PC-3 (cell line): ENCODE measurements at regions of chr10 and their contacts with region 1.

Region 1: GRCh38 chr10:53997953-53998352 is 803.1 kb downstream of the PCDH15 start:
- DNase-seq: peak; percentile 60
- ATAC-seq: peak; percentile 93
- H3K4me3 ChIP-seq: no peak overlapping the region
- H3K27ac ChIP-seq: no peak overlapping the region
- H3K4me1 ChIP-seq: no peaks in the 10 kb centered on the region
- H3K27me3 ChIP-seq: no peaks in the 10 kb centered on the region
- CTCF ChIP-seq: peak; percentile 87

Region 2: DNA sequence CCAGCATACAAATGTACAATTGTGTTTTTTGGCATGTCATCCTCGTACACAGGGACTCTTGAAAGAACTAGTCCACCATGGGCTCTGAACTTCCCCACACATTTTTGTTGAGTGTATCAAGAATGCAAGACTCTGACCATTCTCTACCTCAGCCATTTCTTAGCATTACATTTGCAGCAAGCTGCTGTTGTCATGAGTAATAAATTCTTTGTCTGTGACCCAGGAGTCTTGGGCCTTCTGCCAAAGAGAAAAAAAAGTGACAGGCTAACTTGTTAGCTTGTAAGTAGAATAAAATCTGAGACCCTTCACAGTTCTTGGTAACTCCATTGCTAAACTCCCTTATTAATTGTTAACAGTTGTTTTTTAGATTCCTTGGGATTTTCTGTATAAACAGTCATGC is 683.1 kb before region 1 on chr10:
- CTCF ChIA-PET with region 1: interaction called, 6 read pairs
- POLR2A ChIA-PET with region 1: no interaction called
- intact Hi-C with region 1: loop called (anchors 5 kb)
- DNase-seq: peak; percentile 100
- ATAC-seq: peak; percentile 97
- H3K4me3 ChIP-seq: no peak overlapping the region
- H3K27ac ChIP-seq: no peak overlapping the region
- H3K4me1 ChIP-seq: peaks cover 14% of the 10 kb centered on the region
- H3K27me3 ChIP-seq: no peaks in the 10 kb centered on the region
- CTCF ChIP-seq: no peak

Region 3: DNA sequence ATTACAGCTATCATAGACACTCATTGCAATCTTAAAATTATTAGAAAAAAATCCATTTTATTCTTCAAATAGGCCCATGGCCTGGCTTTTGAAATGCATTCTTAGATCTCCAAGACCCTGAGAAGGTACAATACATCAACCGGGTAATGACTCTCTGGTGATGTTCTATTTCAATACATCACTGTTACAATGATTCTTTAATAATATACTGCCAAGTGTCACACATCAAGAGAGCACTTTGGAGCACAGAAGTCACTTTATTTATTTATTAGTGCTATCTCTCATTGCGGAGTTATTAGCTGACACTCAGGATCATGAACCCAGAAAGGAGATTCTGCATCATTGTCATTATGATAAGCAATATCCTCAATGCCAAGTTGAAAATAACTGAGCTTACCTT is 476.9 kb before region 1 on chr10:
- CTCF ChIA-PET with region 1: no interaction called
- POLR2A ChIA-PET with region 1: no interaction called
- intact Hi-C with region 1: no loop called
- DNase-seq: no peak
- ATAC-seq: no peak
- H3K4me3 ChIP-seq: no peak overlapping the region
- H3K27ac ChIP-seq: no peak overlapping the region
- H3K4me1 ChIP-seq: no peaks in the 10 kb centered on the region
- H3K27me3 ChIP-seq: no peaks in the 10 kb centered on the region
- CTCF ChIP-seq: no peak

Region 4: GRCh38 chr10:54063514-54063913 is 65.6 kb after region 1 on chr10:
- CTCF ChIA-PET with region 1: no interaction called
- POLR2A ChIA-PET with region 1: no interaction called
- intact Hi-C with region 1: no loop called
- DNase-seq: no peak
- ATAC-seq: no peak
- H3K4me3 ChIP-seq: no peak overlapping the region
- H3K27ac ChIP-seq: no peak overlapping the region
- H3K4me1 ChIP-seq: no peaks in the 10 kb centered on the region
- H3K27me3 ChIP-seq: no peaks in the 10 kb centered on the region
- CTCF ChIP-seq: no peak

Region 5: GRCh38 chr10:54124209-54124885 is 126.4 kb after region 1 on chr10:
- CTCF ChIA-PET with region 1: interaction called, 3 read pairs
- POLR2A ChIA-PET with region 1: no interaction called
- intact Hi-C with region 1: loop called (anchors 1 kb)
- DNase-seq: peak; percentile 74
- ATAC-seq: peak; percentile 90
- H3K4me3 ChIP-seq: no peak overlapping the region
- H3K27ac ChIP-seq: peak overlapping the region; percentile 18
- H3K4me1 ChIP-seq: peaks cover 7% of the 10 kb centered on the region
- H3K27me3 ChIP-seq: no peaks in the 10 kb centered on the region
- CTCF ChIP-seq: no peak

Region 6: GRCh38 chr10:54402576-54402975 is 404.6 kb after region 1 on chr10:
- CTCF ChIA-PET with region 1: interaction called, 5 read pairs
- POLR2A ChIA-PET with region 1: no interaction called
- intact Hi-C with region 1: loop called (anchors 1 kb)
- DNase-seq: peak; percentile 76
- ATAC-seq: peak; percentile 76
- H3K4me3 ChIP-seq: no peak overlapping the region
- H3K27ac ChIP-seq: no peak overlapping the region
- H3K4me1 ChIP-seq: no peaks in the 10 kb centered on the region
- H3K27me3 ChIP-seq: no peaks in the 10 kb centered on the region
- CTCF ChIP-seq: peak; percentile 92

Region 7: GRCh38 chr10:54940418-54940817 is 942.5 kb after region 1 on chr10:
- CTCF ChIA-PET with region 1: no interaction called
- POLR2A ChIA-PET with region 1: no interaction called
- intact Hi-C with region 1: loop called (anchors 1 kb)
- DNase-seq: peak; percentile 17
- ATAC-seq: peak; percentile 82
- H3K4me3 ChIP-seq: no peak overlapping the region
- H3K27ac ChIP-seq: no peak overlapping the region
- H3K4me1 ChIP-seq: no peaks in the 10 kb centered on the region
- H3K27me3 ChIP-seq: no peaks in the 10 kb centered on the region
- CTCF ChIP-seq: peak; percentile 54